Activated CD8-positive, alpha-beta T cell treated with anti-CD3 and anti-CD28 coated beads, Interleukin-2, amount 10 ng/mL, durations not matched to agents 7 days and 5 days (primary cell): ENCODE measurements at regions of chr21 and their contacts with region 1.

Region 1: GRCh38 chr21:14737922-14738321 is 191.8 kb upstream of the SAMSN1 start:
- DNase-seq: peak; percentile 73
- ATAC-seq: peak; percentile 84
- H3K4me3 Mint-ChIP-seq: no peak overlapping the region
- H3K27ac Mint-ChIP-seq: no peak overlapping the region
- H3K4me1 Mint-ChIP-seq: peaks cover 58% of the 10 kb centered on the region
- H3K27me3 Mint-ChIP-seq: no peaks in the 10 kb centered on the region

Region 2: GRCh38 chr21:14403681-14404318 is 334.1 kb before region 1 on chr21:
- CTCF ChIA-PET with region 1: interaction called, 11 read pairs
- POLR2A ChIA-PET with region 1: no interaction called
- DNase-seq: peak; percentile 39
- ATAC-seq: no peak
- H3K4me3 Mint-ChIP-seq: no peak overlapping the region
- H3K27ac Mint-ChIP-seq: no peak overlapping the region
- H3K4me1 Mint-ChIP-seq: no peaks in the 10 kb centered on the region
- H3K27me3 Mint-ChIP-seq: no peaks in the 10 kb centered on the region

Region 3: DNA sequence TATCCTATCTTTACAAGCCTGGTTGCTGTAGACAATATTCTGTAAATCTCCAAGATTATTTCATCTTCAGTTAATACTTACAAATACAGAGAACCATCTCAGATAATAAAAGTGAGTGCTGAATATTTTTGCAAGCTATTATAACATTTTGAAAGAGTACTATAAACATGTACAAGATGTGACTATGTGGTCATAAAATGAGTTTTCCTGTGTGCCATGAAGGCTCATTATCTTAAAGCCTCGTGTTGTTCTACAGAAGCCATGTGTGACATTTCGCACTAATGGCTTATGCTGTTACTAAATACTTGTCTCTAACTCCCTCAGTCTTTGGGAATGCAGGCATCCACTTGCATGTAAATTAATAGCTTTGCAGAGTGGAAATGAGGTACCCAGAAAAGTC is 240.1 kb before region 1 on chr21:
- CTCF ChIA-PET with region 1: interaction called, 11 read pairs
- POLR2A ChIA-PET with region 1: no interaction called
- DNase-seq: no peak
- ATAC-seq: no peak
- H3K4me3 Mint-ChIP-seq: no peak overlapping the region
- H3K27ac Mint-ChIP-seq: no peak overlapping the region
- H3K4me1 Mint-ChIP-seq: peaks cover 35% of the 10 kb centered on the region
- H3K27me3 Mint-ChIP-seq: no peaks in the 10 kb centered on the region

Region 4: DNA sequence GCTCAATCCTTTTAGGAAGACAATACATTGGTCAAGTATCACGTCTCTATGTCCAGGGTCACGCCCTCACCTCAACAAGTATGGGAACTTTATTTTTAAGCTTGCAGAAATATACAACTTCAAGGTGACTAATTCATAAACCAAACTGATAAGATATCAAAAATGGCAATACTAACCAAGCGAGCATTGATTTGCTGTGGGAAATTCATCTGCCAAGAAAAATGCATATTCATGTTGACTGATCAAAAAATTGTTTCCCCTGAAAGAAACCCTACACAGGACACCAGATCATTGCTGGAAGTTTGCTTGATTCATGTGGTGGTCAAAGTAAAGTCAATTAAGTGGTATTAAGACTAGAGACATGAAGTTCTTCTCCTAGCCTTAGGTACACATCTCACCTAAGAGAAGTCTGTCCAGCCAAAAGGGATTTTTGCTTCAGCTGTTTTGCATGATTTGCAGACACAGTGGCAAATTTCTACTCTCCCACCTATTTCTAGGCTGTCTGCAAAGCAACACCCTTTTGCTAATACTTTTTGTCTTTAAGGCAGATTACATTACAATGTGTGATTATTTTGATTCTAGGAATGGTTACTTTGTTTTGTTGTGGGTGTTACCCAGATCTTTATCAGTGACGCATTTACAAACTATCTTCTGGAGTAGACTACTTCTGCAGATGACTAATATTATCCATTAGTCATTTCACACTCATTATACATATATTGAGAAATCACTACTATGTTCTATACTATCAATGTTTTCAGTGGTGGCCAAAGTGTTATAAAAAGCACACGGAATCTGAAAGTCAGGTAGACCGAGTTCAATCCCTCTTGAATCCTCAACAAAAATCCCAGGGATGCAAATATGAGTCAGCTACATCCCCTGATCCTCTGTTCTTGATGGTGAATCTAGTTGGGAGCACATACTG is 204.2 kb before region 1 on chr21:
- CTCF ChIA-PET with region 1: interaction called, 16 read pairs
- POLR2A ChIA-PET with region 1: no interaction called
- DNase-seq: no peak
- ATAC-seq: peak; percentile 81
- H3K4me3 Mint-ChIP-seq: peak overlapping the region; percentile 73
- H3K27ac Mint-ChIP-seq: peak overlapping the region; percentile 95
- H3K4me1 Mint-ChIP-seq: peaks cover 68% of the 10 kb centered on the region
- H3K27me3 Mint-ChIP-seq: no peaks in the 10 kb centered on the region

Region 5: DNA sequence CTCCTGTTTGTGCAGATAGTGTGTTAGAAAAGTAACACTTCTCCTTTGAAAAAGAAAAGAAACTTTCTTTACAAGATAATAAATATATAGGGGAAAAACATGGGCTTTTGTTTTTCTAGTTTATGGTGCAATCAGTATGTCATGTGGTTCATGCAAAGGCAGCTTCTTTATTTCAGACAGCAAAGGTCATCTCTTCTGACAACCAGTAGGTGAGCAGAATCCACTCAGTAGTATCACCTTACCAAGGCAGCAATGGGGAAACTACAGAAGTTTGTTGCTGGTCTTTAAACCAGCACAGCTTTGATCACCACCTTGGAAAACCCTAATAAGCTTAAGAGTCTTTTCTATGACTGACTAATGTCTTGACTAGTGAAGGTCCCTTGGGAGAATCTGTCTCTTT is 178.8 kb before region 1 on chr21:
- CTCF ChIA-PET with region 1: no interaction called
- POLR2A ChIA-PET with region 1: no interaction called
- DNase-seq: no peak
- ATAC-seq: no peak
- H3K4me3 Mint-ChIP-seq: no peak overlapping the region
- H3K27ac Mint-ChIP-seq: no peak overlapping the region
- H3K4me1 Mint-ChIP-seq: peaks cover 49% of the 10 kb centered on the region
- H3K27me3 Mint-ChIP-seq: no peaks in the 10 kb centered on the region

Region 6: GRCh38 chr21:14675774-14676530 is 62.0 kb before region 1 on chr21:
- CTCF ChIA-PET with region 1: interaction called, 24 read pairs
- POLR2A ChIA-PET with region 1: no interaction called
- DNase-seq: peak; percentile 53
- ATAC-seq: peak; percentile 91
- H3K4me3 Mint-ChIP-seq: peak overlapping the region; percentile 60
- H3K27ac Mint-ChIP-seq: peak overlapping the region; percentile 94
- H3K4me1 Mint-ChIP-seq: peaks cover 44% of the 10 kb centered on the region
- H3K27me3 Mint-ChIP-seq: no peaks in the 10 kb centered on the region

Region 7: GRCh38 chr21:14762734-14763694 is 25.1 kb after region 1 on chr21:
- CTCF ChIA-PET with region 1: interaction called, 10 read pairs
- POLR2A ChIA-PET with region 1: interaction called, 5 read pairs
- DNase-seq: no peak
- ATAC-seq: peak; percentile 90
- H3K4me3 Mint-ChIP-seq: no peak overlapping the region
- H3K27ac Mint-ChIP-seq: no peak overlapping the region
- H3K4me1 Mint-ChIP-seq: peaks cover 9% of the 10 kb centered on the region
- H3K27me3 Mint-ChIP-seq: no peaks in the 10 kb centered on the region

Region 8: GRCh38 chr21:15029077-15029476 is 291.2 kb after region 1 on chr21:
- CTCF ChIA-PET with region 1: no interaction called
- POLR2A ChIA-PET with region 1: no interaction called
- DNase-seq: no peak
- ATAC-seq: no peak
- H3K4me3 Mint-ChIP-seq: no peak overlapping the region
- H3K27ac Mint-ChIP-seq: no peak overlapping the region
- H3K4me1 Mint-ChIP-seq: peaks cover 6% of the 10 kb centered on the region
- H3K27me3 Mint-ChIP-seq: no peaks in the 10 kb centered on the region